Ovary (tissue), 10 donors: ENCODE measurements at regions of chr14 and their contacts with region 1.

Region 1: DNA sequence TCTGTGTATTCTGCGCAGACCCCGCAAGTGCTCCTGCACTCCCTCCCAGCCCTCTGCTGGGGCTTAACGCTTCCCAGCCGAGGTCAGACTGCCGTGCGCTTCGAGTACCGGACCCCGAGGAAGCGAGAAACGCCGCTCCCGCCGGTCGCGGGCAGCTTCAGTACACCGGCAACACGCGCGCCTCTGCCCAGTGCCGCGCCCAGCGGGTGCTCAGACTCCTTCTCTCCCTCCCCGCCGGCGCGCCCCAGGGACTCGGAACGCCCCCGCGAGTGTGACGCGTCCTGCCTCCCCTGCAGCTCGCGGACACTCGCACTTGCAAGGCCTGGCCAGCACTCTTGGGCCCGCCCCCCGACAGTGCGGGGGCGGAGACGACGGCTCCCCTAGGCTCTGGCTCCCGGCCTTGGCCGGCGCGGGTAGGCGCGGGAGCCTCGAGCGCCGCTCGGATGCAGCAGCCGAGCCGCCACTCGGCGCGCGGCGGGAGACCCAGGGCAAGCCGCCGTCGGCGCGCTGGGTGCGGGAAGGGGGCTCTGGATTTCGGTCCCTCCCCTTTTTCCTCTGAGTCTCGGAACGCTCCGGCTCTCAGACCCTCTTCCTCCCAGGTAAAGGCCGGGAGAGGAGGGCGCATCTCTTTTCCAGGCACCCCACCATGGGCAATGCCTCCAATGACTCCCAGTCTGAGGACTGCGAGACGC is at the start of gene PTGER2:
- DNase-seq: peak; percentile 85 to 92 (median 88)
- H3K4me3 ChIP-seq: peak within 1 kb of the TSS; percentile 45
- H3K27ac ChIP-seq: peak within 1 kb of the TSS; percentile 57 to 61
- H3K4me1 ChIP-seq: peaks cover 7% of the 10 kb centered on the region
- H3K27me3 ChIP-seq: no peaks in the 10 kb centered on the region
- CTCF ChIP-seq: no peak
- EP300 ChIP-seq: no peak
- POLR2A ChIP-seq: no peak
- total RNA-seq, gene PTGER2: 0.86 to 15.6 (median 6.7) TPM

Region 2: GRCh38 chr14:52467515-52468266 is 153.6 kb after region 1 on chr14:
- intact Hi-C with region 1: loop called in 1 of 4 experiments (anchors 10 kb)
- DNase-seq: no peak
- H3K4me3 ChIP-seq: no peak overlapping the region
- H3K27ac ChIP-seq: no peak overlapping the region
- H3K4me1 ChIP-seq: no peaks in the 10 kb centered on the region
- H3K27me3 ChIP-seq: no peaks in the 10 kb centered on the region
- CTCF ChIP-seq: no peak
- EP300 ChIP-seq: no peak
- POLR2A ChIP-seq: no peak